PC-9 (cell line): ENCODE measurements at regions of chr5 and their contacts with region 1.

Region 1: DNA sequence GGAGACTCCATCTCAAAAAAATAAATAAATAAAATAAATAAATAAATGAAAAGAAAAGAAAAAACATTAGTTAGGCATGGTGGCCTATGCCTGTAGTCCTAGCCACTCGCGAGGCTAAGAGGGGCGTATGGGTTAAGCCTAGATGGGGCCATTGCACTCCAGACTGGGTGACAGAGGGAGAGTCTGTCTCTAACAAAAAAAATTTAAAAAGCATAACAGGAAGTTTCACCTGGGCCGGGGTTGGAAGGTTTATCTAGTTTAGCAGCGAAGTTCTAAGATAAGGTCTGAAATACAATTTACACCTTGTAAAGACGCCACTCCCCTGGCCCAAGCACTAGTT is 18.0 kb downstream of the ZMAT2 start:
- DNase-seq: no peak
- H3K4me3 ChIP-seq: peak overlapping the region; percentile 66
- H3K27ac ChIP-seq: peak overlapping the region; percentile 91
- H3K4me1 ChIP-seq: 0 out of 2 replicates have a peak, but pooled peaks cover 5% of the 10 kb centered on the region
- H3K27me3 ChIP-seq: no peaks in the 10 kb centered on the region
- CTCF ChIP-seq: no peak

Region 2: GRCh38 chr5:140362860-140363630 is 355.2 kb before region 1 on chr5:
- CTCF ChIA-PET with region 1: interaction called, 9 read pairs
- POLR2A ChIA-PET with region 1: no interaction called
- intact Hi-C with region 1: loop called (anchors 1 kb)
- DNase-seq: peak; percentile 54 to 81
- H3K4me3 ChIP-seq: peak overlapping the region; percentile 53; the same call in 1 of the 2 replicates
- H3K27ac ChIP-seq: no peak overlapping the region
- H3K4me1 ChIP-seq: no peaks in the 10 kb centered on the region
- H3K27me3 ChIP-seq: no peaks in the 10 kb centered on the region
- CTCF ChIP-seq: peak; percentile 93

Region 3: GRCh38 chr5:140401362-140402257 is 316.6 kb before region 1 on chr5 and contains the start of gene ANKHD1:
- CTCF ChIA-PET with region 1: no interaction called
- POLR2A ChIA-PET with region 1: interaction called, 10 read pairs
- intact Hi-C with region 1: loop called (anchors 2 kb)
- DNase-seq: peak; percentile 98 to 99
- H3K4me3 ChIP-seq: peak within 1 kb of the TSS; percentile 89
- H3K27ac ChIP-seq: peak within 1 kb of the TSS; percentile 83
- H3K4me1 ChIP-seq: peaks cover 37% of the 10 kb centered on the region
- H3K27me3 ChIP-seq: no peaks in the 10 kb centered on the region
- CTCF ChIP-seq: no peak
- total RNA-seq, gene ANKHD1: 90.7 and 109 TPM in 2 replicates

Region 4: DNA sequence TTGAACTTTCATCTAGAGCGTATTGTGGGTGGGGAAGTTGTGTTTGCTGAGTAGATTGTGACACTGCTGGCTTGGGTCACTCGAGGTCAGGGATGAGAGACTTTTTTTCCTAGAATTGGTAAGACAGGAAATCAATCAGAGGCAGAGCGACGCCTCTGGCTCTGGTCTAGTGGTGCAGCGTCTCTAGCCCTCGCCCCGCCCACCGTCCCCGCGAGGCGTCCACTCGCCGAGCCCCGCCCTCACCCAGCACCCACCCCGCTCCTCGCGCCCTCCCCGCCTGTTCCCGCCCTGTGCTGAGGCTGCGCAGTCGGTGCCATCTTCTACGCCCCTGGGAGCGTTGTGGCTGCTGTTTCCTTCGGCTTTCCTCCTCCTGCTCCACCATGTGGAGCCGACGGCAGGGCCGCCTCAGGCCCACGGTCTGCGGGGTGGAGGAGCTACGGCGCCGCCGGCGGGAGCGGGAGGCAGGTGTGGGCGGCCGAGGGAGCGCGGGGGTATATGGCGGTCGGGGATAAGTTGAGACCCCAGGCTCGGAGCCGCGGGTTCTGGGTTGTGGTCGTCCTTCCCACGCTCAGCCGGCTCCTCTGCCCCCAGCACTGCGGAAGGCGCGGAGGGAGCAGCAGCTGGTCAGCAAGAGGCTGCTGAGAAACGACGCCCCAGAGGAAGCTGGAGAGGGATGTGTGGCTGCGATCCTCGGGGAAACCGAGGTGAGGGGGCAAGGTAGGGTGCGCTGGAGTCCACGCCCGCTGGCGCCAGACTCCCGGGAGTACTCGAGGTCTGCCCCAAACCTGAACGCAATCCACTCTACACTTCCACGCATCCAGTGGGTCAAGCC is 78.8 kb before region 1 on chr5 and contains the start of gene TMCO6:
- CTCF ChIA-PET with region 1: no interaction called
- POLR2A ChIA-PET with region 1: no interaction called
- intact Hi-C with region 1: loop called (anchors 2 kb)
- DNase-seq: peak; percentile 89 to 95
- H3K4me3 ChIP-seq: peak within 1 kb of the TSS; percentile 78
- H3K27ac ChIP-seq: peak within 1 kb of the TSS; percentile 73
- H3K4me1 ChIP-seq: peaks cover 10% of the 10 kb centered on the region
- H3K27me3 ChIP-seq: no peaks in the 10 kb centered on the region
- CTCF ChIP-seq: peak; percentile 63
- total RNA-seq, gene TMCO6: 12.1 and 25.2 TPM in 2 replicates

Region 5: DNA sequence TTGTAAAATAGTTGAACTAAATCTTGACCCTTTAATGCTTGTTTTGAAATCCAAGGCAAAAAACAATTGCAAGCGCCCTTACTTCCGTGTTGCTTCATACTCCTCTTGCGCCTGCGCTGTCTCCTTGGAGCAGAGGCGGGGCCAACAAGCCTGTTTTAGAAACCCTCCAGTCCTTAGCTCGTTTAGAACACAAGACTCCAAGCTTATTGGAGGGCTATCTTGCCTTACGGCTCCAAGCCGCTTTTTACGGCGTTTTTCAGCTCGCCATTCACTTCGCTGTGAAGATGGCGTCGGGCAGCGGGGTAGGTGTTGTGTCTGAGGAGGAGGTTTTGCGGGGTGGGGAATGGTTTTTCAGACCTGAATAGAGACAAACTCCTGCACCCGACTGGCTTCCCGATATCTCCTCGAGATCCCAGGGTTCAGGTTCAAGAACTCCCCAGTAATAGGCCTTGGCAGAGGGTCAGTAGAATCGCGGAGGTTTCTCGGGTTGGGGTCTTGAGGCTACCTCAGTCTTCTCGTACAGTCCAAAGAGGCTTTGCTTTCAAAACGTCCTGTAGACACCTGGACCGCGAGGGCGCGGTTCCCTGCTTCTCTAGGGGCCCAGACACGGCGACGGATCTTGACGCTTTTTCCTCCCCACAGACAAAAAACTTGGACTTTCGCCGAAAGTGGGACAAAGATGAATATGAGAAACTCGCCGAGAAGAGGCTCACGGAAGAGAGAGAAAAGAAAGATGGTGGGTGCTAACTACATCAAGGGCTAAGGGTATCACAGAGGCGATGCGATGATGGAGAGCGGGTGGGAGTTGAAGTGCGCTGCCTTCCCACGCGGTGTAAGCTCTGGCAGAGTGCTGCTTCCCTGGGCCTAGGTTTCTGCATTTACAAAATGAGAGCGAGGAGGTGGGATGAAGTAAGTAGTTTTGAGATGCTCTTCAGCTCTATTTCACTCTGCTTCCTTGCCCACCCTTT is 17.8 kb before region 1 on chr5 and contains the start of gene ZMAT2:
- CTCF ChIA-PET with region 1: no interaction called
- POLR2A ChIA-PET with region 1: interaction called, 18 read pairs
- intact Hi-C with region 1: no loop called
- DNase-seq: peak; percentile 90 to 98
- H3K4me3 ChIP-seq: peak within 1 kb of the TSS; percentile 81
- H3K27ac ChIP-seq: peak within 1 kb of the TSS; percentile 37
- H3K4me1 ChIP-seq: peaks cover 13% of the 10 kb centered on the region; the same call in 1 of the 2 replicates
- H3K27me3 ChIP-seq: no peaks in the 10 kb centered on the region
- CTCF ChIP-seq: no peak
- total RNA-seq, gene ZMAT2: 53.5 and 60.1 TPM in 2 replicates

Region 6: DNA sequence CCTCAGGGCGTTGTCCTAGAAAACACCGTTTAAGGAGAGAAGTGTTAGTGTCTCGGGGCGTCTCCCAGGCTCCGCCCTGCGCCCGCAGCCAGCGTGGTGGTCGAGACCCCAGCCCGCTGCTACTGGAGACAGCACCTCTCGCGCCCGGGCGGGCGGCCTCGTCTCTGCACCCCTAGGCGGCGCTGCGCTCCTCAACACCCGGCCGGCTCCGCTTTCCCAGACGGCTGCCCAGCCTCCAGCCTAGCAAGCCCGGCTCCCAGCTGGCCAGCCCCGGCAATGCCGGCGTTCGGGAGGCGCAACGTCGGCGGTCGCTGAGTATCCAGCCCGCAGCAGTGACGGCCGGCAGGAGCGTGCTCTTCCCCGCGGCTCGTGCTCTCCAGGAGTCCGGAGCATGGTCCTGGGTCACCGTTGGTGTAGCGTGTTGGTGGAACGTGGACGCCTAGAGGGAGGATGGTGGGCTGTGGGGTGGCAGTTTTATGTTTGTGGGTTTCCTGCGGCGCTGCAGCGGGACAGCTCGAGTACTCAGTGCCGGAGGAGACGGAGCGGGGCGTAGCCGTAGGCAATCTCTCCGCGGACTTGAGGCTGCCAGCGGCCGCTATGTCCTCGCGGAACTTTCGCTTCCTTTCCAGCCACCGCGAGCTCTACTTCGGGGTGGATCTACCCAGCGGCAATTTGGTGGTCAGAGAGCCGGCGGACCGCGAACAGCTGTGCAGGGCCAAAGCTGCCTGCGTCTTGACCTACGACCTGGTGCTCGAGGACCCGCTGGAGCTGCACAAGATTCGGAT is 208.4 kb after region 1 on chr5:
- CTCF ChIA-PET with region 1: no interaction called
- POLR2A ChIA-PET with region 1: no interaction called
- intact Hi-C with region 1: no loop called
- DNase-seq: peak; percentile 49 to 88
- H3K4me3 ChIP-seq: peak overlapping the region; percentile 35; the same call in 1 of the 2 replicates
- H3K27ac ChIP-seq: no peak overlapping the region
- H3K4me1 ChIP-seq: no peaks in the 10 kb centered on the region
- H3K27me3 ChIP-seq: no peaks in the 10 kb centered on the region
- CTCF ChIP-seq: peak; percentile 62